Activated CD8-positive, alpha-beta T cell treated with anti-CD3 and anti-CD28 coated beads for 36 hours (primary cell): ENCODE measurements at regions of chr14 and their contacts with region 1.

Region 1: GRCh38 chr14:103941462-103941861 is 867 bp downstream of the RD3L start:
- DNase-seq: no peak
- ATAC-seq: no peak
- H3K4me3 Mint-ChIP-seq: no peak overlapping the region
- H3K27ac Mint-ChIP-seq: no peak overlapping the region
- H3K4me1 Mint-ChIP-seq: no peaks in the 10 kb centered on the region
- H3K27me3 Mint-ChIP-seq: peaks cover 20% of the 10 kb centered on the region
- CTCF ChIP-seq: no peak

Region 2: GRCh38 chr14:103880348-103881267 is 60.9 kb before region 1 on chr14:
- CTCF ChIA-PET with region 1: no interaction called
- POLR2A ChIA-PET with region 1: no interaction called
- intact Hi-C with region 1: no loop called
- DNase-seq: peak; percentile 41
- ATAC-seq: no peak
- H3K4me3 Mint-ChIP-seq: peak overlapping the region; percentile 24
- H3K27ac Mint-ChIP-seq: no peak overlapping the region
- H3K4me1 Mint-ChIP-seq: peaks cover 19% of the 10 kb centered on the region
- H3K27me3 Mint-ChIP-seq: peaks cover 4% of the 10 kb centered on the region
- CTCF ChIP-seq: no peak

Region 3: GRCh38 chr14:103893981-103894722 is 47.3 kb before region 1 on chr14:
- CTCF ChIA-PET with region 1: no interaction called
- POLR2A ChIA-PET with region 1: no interaction called
- intact Hi-C with region 1: no loop called
- DNase-seq: no peak
- ATAC-seq: no peak
- H3K4me3 Mint-ChIP-seq: no peak overlapping the region
- H3K27ac Mint-ChIP-seq: no peak overlapping the region
- H3K4me1 Mint-ChIP-seq: no peaks in the 10 kb centered on the region
- H3K27me3 Mint-ChIP-seq: no peaks in the 10 kb centered on the region
- CTCF ChIP-seq: no peak

Region 4: GRCh38 chr14:103920981-103921854 is 20.2 kb before region 1 on chr14:
- CTCF ChIA-PET with region 1: interaction called, 12 read pairs
- POLR2A ChIA-PET with region 1: no interaction called
- intact Hi-C with region 1: no loop called
- DNase-seq: peak; percentile 92
- ATAC-seq: peak; percentile 100
- H3K4me3 Mint-ChIP-seq: peak overlapping the region; percentile 85
- H3K27ac Mint-ChIP-seq: peak overlapping the region; percentile 78
- H3K4me1 Mint-ChIP-seq: peaks cover 15% of the 10 kb centered on the region
- H3K27me3 Mint-ChIP-seq: peaks cover 5% of the 10 kb centered on the region
- CTCF ChIP-seq: peak; percentile 93

Region 5: GRCh38 chr14:103931422-103931821 is 10.0 kb before region 1 on chr14:
- CTCF ChIA-PET with region 1: no interaction called
- POLR2A ChIA-PET with region 1: no interaction called
- intact Hi-C with region 1: no loop called
- DNase-seq: no peak
- ATAC-seq: peak; percentile 69
- H3K4me3 Mint-ChIP-seq: no peak overlapping the region
- H3K27ac Mint-ChIP-seq: peak overlapping the region; percentile 40
- H3K4me1 Mint-ChIP-seq: peaks cover 3% of the 10 kb centered on the region
- H3K27me3 Mint-ChIP-seq: peaks cover 3% of the 10 kb centered on the region
- CTCF ChIP-seq: no peak